Left lung (tissue), 14 donors: ENCODE measurements at regions of chr9 and their contacts with region 1.

Region 1: DNA sequence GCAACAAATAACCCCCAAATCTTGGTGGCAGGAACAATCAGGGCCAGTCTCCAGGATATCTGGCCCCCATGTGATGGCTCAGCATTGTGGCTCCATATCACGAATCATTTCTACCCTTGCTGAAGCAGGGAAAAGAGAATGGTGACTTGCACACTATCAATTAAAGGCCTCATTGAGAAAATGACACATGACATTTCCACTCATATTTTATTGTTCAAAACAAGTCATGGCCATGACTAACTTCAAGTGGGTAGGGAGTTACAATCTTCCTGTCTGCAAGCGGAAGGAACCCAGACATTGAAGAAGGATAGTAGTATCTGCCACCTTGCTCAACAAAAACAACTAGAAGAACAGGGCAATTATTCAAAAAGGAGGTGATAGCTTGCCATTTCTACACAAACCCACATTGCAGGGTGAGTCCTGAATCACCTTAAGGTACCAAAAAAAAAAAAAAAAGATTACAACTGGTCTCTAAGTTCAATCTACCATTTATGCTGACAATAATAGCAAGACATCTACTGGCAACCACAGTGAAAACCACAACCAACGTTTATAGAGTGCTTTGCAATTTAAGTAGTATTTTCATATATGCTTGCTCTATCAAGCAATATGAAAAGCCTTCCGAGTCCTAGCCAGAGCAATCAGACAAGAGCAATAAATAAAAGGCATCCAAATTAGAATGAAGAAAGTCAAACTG is 186.7 kb upstream of the DAPK1 start:
- DNase-seq: no peak
- ATAC-seq: no peak
- H3K4me3 ChIP-seq: no peak overlapping the region
- H3K27ac ChIP-seq: no peak overlapping the region
- H3K4me1 ChIP-seq: no peaks in the 10 kb centered on the region
- H3K27me3 ChIP-seq: no peaks in the 10 kb centered on the region
- CTCF ChIP-seq: no peak

Region 2: DNA sequence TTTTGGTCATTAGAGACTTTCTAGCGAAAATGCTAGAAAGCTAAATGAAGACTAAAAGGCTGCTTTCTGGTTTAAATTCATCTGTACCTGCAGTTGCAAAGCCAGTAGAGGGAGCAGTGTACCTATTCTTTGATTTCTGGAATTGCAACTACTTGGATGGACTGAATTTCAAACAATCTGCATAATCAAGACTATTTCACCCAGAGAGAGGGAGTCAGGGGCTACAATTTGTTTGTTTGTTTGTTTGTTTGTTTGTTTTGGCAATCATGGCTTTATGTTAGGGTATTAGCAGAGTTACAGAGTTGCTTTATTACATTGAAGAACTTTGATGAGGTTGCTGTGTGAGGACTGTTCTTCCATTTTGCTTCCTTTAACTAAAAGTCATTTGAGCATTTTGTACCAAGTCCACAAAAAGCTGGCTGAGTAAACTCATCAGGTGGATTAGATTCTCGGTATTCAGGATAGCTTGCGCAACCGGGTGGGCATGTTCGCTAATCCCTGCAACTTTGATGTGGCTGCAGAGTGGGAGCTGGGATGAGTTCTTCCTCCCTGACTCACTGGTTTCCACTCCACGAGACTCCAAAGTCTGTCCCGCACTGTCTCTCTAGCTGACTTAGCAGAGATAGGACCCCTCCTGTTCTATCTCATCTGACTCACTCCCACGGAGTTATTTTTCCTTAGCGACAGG is 876.8 kb before region 1 on chr9:
- intact Hi-C with region 1: loop called in 1 of 2 experiments (anchors 10 kb)
- DNase-seq: peak in 3 of 4 donors; percentile 52 to 77 (median 65)
- ATAC-seq: peak; percentile 89
- H3K4me3 ChIP-seq: no peak overlapping the region
- H3K27ac ChIP-seq: peak overlapping the region in 1 of 2 donors; percentile 27
- H3K4me1 ChIP-seq: no peaks in the 10 kb centered on the region
- H3K27me3 ChIP-seq: no peaks in the 10 kb centered on the region
- CTCF ChIP-seq: peak; percentile 57 to 61